Heart right ventricle (tissue), 16 donors: ENCODE measurements at regions of chr3 and their contacts with region 1.

Region 1: DNA sequence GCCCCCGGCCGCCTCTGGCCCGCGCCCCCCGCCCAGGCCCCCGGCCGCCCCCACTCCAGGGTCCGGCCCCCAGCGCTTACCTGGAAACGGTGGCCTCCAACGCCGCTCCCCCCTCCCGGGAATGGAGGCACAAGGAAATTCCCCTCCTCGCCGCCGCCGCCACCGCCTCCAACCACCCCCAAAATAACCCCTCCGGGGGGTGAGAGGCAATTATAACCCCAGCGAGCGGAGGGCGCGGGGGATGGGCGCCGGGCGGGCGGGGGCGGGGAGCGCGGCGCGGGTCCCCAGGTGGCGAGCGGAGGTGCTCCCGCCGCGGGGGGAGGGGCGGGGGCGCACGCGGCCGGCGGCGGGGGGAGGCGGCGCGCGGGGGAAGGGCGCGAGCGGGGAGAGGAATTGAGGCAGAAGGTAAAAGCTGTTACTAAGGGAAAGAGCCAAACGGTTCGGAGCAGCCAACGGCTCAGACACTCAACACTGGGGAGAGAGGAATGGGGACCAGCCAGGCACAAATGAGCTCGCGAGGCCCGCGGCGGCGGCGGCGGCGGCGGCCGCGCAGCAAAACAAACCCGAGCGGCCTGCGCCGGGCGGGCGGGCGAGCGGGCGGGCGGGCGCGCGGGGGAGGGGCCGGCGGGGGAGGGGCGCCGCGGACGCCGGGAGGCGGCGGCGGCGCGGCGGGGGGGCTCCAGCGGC is at the start of gene TBL1XR1:
- DNase-seq: peak; percentile 90 to 94
- ATAC-seq: peak; percentile 79 to 91 (median 88)
- H3K4me3 ChIP-seq: peak within 1 kb of the TSS; percentile 64 to 92 (median 84)
- H3K27ac ChIP-seq: peak within 1 kb of the TSS; percentile 96 to 99 (median 98)
- H3K4me1 ChIP-seq: peaks cover 0 to 65% (median 25%) of the 10 kb centered on the region in 9 donors
- H3K27me3 ChIP-seq: no peaks in the 10 kb centered on the region
- CTCF ChIP-seq: no peak
- total RNA-seq, gene TBL1XR1: 79.6 to 184 (median 129) TPM

Region 2: GRCh38 chr3:176521531-176522175 is 675.5 kb before region 1 on chr3:
- intact Hi-C with region 1: no loop called
- DNase-seq: no peak
- ATAC-seq: no peak
- H3K4me3 ChIP-seq: no peak overlapping the region
- H3K27ac ChIP-seq: no peak overlapping the region
- H3K4me1 ChIP-seq: no peaks in the 10 kb centered on the region
- H3K27me3 ChIP-seq: no peaks in the 10 kb centered on the region
- CTCF ChIP-seq: no peak

Region 3: DNA sequence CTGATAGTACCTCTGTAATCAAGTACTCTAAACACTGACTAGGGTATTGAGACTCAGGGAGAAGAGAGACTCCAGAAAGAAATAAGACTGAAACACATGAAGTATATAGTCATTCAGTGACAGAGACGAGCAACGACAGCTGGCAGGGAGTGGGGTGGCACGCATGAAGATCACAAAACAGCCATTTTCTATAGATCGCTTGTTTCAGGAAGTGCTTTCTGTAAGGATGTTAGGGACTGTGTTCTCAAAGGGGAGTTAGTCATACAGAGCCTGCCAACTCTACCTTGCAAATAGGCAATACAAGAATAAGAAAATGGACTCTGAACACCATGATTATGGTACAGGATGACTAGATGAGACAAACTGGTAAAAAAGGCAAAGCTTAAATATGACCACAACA is 139.4 kb before region 1 on chr3:
- intact Hi-C with region 1: loop called in 8 of 10 experiments (anchors 2 to 10 kb)
- DNase-seq: no peak
- ATAC-seq: no peak
- H3K4me3 ChIP-seq: no peak overlapping the region
- H3K27ac ChIP-seq: no peak overlapping the region
- H3K4me1 ChIP-seq: peaks cover 0 to 70% (median 43%) of the 10 kb centered on the region in 9 donors
- H3K27me3 ChIP-seq: no peaks in the 10 kb centered on the region
- CTCF ChIP-seq: no peak

Region 4: DNA sequence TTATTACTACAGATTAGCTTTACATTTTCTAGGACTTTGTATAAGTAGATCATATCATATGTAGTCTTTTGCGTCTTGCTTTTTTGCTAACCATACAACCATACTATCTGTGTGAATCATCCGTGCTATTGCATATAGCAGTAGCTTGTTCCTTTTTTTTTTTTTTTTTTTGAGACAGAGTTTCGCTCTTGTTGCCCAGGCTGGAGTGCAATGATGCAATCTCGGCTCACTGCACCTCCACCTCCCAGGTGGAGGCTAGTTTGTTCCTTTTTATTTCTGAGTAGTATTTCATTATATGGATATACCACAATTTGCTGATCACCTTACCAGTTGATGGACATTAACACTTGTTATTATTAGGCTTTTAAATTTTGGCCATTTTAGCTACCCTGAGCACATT is 54.6 kb after region 1 on chr3:
- intact Hi-C with region 1: no loop called
- DNase-seq: no peak
- ATAC-seq: no peak
- H3K4me3 ChIP-seq: no peak overlapping the region
- H3K27ac ChIP-seq: no peak overlapping the region
- H3K4me1 ChIP-seq: peaks cover 0 to 15% (median 0%) of the 10 kb centered on the region in 9 donors
- H3K27me3 ChIP-seq: no peaks in the 10 kb centered on the region
- CTCF ChIP-seq: no peak

Region 5: DNA sequence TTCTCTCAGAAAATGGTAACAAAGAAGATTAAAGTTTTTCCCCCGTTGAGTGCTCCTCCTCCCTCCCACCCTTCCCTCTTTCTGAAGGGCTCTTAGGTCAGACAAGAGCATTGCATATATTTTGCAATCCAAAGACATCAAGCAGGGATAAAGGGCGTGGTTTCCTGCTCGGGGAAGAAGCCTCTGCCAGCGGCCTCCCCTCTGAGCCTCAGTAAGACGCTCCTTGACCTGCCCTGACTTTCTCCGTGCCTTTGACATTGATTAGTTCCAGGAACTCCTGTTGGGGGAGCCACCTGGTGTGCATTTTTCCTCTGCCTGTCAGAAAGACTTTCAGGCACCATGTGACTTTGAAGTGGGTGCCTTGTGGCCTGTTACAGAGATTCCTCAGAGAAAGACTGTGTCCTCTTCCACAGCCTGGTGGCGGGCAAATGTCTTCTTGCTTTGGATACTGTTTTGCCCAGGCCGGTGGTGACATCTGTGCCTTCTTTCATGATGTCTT is 87.2 kb after region 1 on chr3:
- intact Hi-C with region 1: loop called in 2 of 10 experiments (anchors 10 kb)
- DNase-seq: peak; percentile 20 to 26
- ATAC-seq: peak in 6 of 8 donors; percentile 33 to 85 (median 42)
- H3K4me3 ChIP-seq: no peak overlapping the region
- H3K27ac ChIP-seq: peak overlapping the region in 1 of 10 donors; percentile 42
- H3K4me1 ChIP-seq: peaks cover 0 to 31% (median 3%) of the 10 kb centered on the region in 9 donors
- H3K27me3 ChIP-seq: no peaks in the 10 kb centered on the region
- CTCF ChIP-seq: peak in 1 of 9 donors; percentile 9

Region 6: GRCh38 chr3:177724020-177724638 is 526.9 kb after region 1 on chr3:
- intact Hi-C with region 1: loop called in 1 of 10 experiments (anchors 2 kb)
- DNase-seq: peak; percentile 46 to 71
- ATAC-seq: peak; percentile 84 to 98 (median 94)
- H3K4me3 ChIP-seq: no peak overlapping the region
- H3K27ac ChIP-seq: peak overlapping the region; percentile 42 to 79 (median 64)
- H3K4me1 ChIP-seq: peaks cover 2 to 54% (median 40%) of the 10 kb centered on the region in 9 donors
- H3K27me3 ChIP-seq: no peaks in the 10 kb centered on the region
- CTCF ChIP-seq: no peak

Region 7: GRCh38 chr3:178325330-178325729 is 1128.1 kb after region 1 on chr3:
- intact Hi-C with region 1: loop called in 4 of 10 experiments (anchors 5 to 10 kb)
- DNase-seq: no peak
- ATAC-seq: peak in 1 of 8 donors; percentile 25
- H3K4me3 ChIP-seq: no peak overlapping the region
- H3K27ac ChIP-seq: peak overlapping the region in 4 of 10 donors; percentile 17 to 44 (median 41)
- H3K4me1 ChIP-seq: peaks cover 6 to 41% (median 21%) of the 10 kb centered on the region in 9 donors
- H3K27me3 ChIP-seq: no peaks in the 10 kb centered on the region
- CTCF ChIP-seq: peak in 8 of 9 donors; percentile 8 to 68 (median 54)